MCF 10A (cell line): ENCODE measurements at regions of chr3 and their contacts with region 1.

Region 1: GRCh38 chr3:172167892-172168648 is 128.7 kb downstream of the FNDC3B start:
- DNase-seq: no peak
- H3K4me3 Mint-ChIP-seq: no peak overlapping the region
- H3K27ac Mint-ChIP-seq: peak overlapping the region; percentile 96
- H3K4me1 Mint-ChIP-seq: peaks cover 16% of the 10 kb centered on the region
- H3K27me3 Mint-ChIP-seq: no peaks in the 10 kb centered on the region
- CTCF ChIP-seq: no peak

Region 2: GRCh38 chr3:172153335-172153861 is 14.7 kb before region 1 on chr3:
- CTCF ChIA-PET with region 1: interaction called, 7 read pairs
- POLR2A ChIA-PET with region 1: interaction called, 39 read pairs
- intact Hi-C with region 1: no loop called
- DNase-seq: peak; percentile 94
- H3K4me3 Mint-ChIP-seq: peak overlapping the region; percentile 53
- H3K27ac Mint-ChIP-seq: peak overlapping the region; percentile 88
- H3K4me1 Mint-ChIP-seq: peaks cover 53% of the 10 kb centered on the region
- H3K27me3 Mint-ChIP-seq: no peaks in the 10 kb centered on the region
- CTCF ChIP-seq: no peak

Region 3: GRCh38 chr3:172181932-172182586 is 14.0 kb after region 1 on chr3:
- CTCF ChIA-PET with region 1: interaction called, 3 read pairs
- POLR2A ChIA-PET with region 1: interaction called, 11 read pairs
- intact Hi-C with region 1: no loop called
- DNase-seq: no peak
- H3K4me3 Mint-ChIP-seq: no peak overlapping the region
- H3K27ac Mint-ChIP-seq: no peak overlapping the region
- H3K4me1 Mint-ChIP-seq: peaks cover 32% of the 10 kb centered on the region
- H3K27me3 Mint-ChIP-seq: no peaks in the 10 kb centered on the region
- CTCF ChIP-seq: no peak

Region 4: GRCh38 chr3:172201136-172201869 is 33.2 kb after region 1 on chr3:
- CTCF ChIA-PET with region 1: interaction called, 6 read pairs
- POLR2A ChIA-PET with region 1: interaction called, 21 read pairs
- intact Hi-C with region 1: no loop called
- DNase-seq: peak; percentile 70
- H3K4me3 Mint-ChIP-seq: peak overlapping the region; percentile 50
- H3K27ac Mint-ChIP-seq: peak overlapping the region; percentile 89
- H3K4me1 Mint-ChIP-seq: peaks cover 39% of the 10 kb centered on the region
- H3K27me3 Mint-ChIP-seq: no peaks in the 10 kb centered on the region
- CTCF ChIP-seq: no peak